Ascending aorta (tissue), 2 donors: ENCODE measurements at regions of chr10 and their contacts with region 1.

Region 1: GRCh38 chr10:30413996-30414576 is 19.9 kb upstream of the MAP3K8 start:
- DNase-seq: no peak
- H3K4me3 ChIP-seq: no peak overlapping the region
- H3K27ac ChIP-seq: no peak overlapping the region
- H3K4me1 ChIP-seq: peaks cover 0 to 11% of the 10 kb centered on the region in 2 donors
- H3K27me3 ChIP-seq: no peaks in the 10 kb centered on the region
- CTCF ChIP-seq: peak; percentile 77 to 86 (median 84)

Region 2: GRCh38 chr10:30433730-30434272 is 19.7 kb after region 1 on chr10 and contains the start of gene MAP3K8:
- intact Hi-C with region 1: loop called (anchors 2 kb)
- DNase-seq: peak; percentile 84 to 97
- H3K4me3 ChIP-seq: peak within 1 kb of the TSS; percentile 90 to 94
- H3K27ac ChIP-seq: peak within 1 kb of the TSS; percentile 98 to 99
- H3K4me1 ChIP-seq: peaks cover 0 to 10% of the 10 kb centered on the region in 2 donors
- H3K27me3 ChIP-seq: no peaks in the 10 kb centered on the region
- CTCF ChIP-seq: no peak
- total RNA-seq, gene MAP3K8: 15.8 TPM

Region 3: DNA sequence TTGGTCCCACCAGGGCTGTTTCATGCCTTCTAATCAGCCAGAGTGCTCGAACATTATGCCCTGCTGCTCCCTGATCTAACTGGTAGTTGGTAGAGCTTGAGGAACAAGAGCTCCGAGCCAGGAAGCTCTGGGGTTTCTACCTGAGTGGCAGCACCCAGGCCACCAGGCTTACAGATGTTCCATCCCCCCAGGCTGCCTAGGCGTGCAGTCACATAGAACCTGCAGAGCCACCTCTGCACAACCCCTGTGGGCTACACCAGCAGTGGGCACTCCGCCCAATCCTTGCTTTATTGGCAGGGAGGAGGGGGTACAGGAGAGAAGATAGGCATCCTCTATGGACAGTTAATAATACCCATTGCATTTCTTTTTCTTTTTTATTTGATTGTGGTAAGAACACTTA is 41.7 kb after region 1 on chr10:
- intact Hi-C with region 1: loop called (anchors 1 kb)
- DNase-seq: no peak
- H3K4me3 ChIP-seq: peak overlapping the region in 1 of 2 donors; percentile 1
- H3K27ac ChIP-seq: peak overlapping the region; percentile 74 to 87
- H3K4me1 ChIP-seq: peaks cover 15 to 63% of the 10 kb centered on the region in 2 donors
- H3K27me3 ChIP-seq: no peaks in the 10 kb centered on the region
- CTCF ChIP-seq: no peak

Region 4: DNA sequence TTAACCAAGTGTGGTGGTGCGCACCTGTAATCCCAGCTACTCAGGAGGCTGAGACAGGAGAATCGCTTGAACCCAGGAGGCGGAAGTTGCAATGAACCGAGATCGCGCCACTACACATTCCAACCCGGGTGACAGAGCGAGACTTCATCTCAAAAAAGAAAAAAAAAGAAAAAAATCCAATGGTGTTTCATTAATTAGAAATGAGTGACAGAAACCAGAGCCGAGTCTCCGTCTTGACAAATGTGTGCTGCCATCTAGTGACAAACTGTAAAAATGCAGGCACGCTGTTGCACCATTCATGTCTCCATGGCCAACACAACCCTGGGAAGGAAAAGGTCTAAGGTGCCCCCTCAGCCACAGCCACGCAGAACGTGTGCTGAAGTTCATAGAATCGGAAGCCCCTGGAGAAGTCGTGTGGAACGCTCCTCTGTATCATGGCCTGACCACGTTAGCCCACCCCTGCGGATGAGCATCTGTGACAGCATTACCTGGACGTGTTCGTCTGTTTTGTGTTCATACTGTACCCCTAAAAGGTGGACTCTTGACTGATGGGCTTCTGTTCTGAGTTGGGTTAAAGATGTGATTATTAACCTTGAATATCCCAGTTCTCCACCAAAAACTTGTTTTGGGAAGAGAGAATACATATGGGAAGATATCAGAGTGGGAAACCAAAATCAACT is 120.5 kb after region 1 on chr10:
- intact Hi-C with region 1: loop called (anchors 1 kb)
- DNase-seq: peak; percentile 28 to 90
- H3K4me3 ChIP-seq: no peak overlapping the region
- H3K27ac ChIP-seq: no peak overlapping the region
- H3K4me1 ChIP-seq: no peaks in the 10 kb centered on the region
- H3K27me3 ChIP-seq: no peaks in the 10 kb centered on the region
- CTCF ChIP-seq: peak; percentile 86 to 95 (median 93)

Region 5: GRCh38 chr10:30591249-30591670 is 177.2 kb after region 1 on chr10:
- intact Hi-C with region 1: loop called (anchors 5 kb)
- DNase-seq: no peak
- H3K4me3 ChIP-seq: no peak overlapping the region
- H3K27ac ChIP-seq: no peak overlapping the region
- H3K4me1 ChIP-seq: no peaks in the 10 kb centered on the region
- H3K27me3 ChIP-seq: no peaks in the 10 kb centered on the region
- CTCF ChIP-seq: peak; percentile 79 to 83 (median 79)